Activated CD8-positive, alpha-beta T cell treated with anti-CD3 and anti-CD28 coated beads for 36 hours (primary cell): ENCODE measurements at regions of chr6 and their contacts with region 1.

Region 1: GRCh38 chr6:34196126-34196830 is 40.4 kb upstream of the HMGA1 start:
- DNase-seq: peak; percentile 90
- ATAC-seq: peak; percentile 97
- H3K4me3 Mint-ChIP-seq: peak overlapping the region; percentile 71
- H3K27ac Mint-ChIP-seq: peak overlapping the region; percentile 67
- H3K4me1 Mint-ChIP-seq: peaks cover 10% of the 10 kb centered on the region
- H3K27me3 Mint-ChIP-seq: no peaks in the 10 kb centered on the region
- CTCF ChIP-seq: peak; percentile 99

Region 2: DNA sequence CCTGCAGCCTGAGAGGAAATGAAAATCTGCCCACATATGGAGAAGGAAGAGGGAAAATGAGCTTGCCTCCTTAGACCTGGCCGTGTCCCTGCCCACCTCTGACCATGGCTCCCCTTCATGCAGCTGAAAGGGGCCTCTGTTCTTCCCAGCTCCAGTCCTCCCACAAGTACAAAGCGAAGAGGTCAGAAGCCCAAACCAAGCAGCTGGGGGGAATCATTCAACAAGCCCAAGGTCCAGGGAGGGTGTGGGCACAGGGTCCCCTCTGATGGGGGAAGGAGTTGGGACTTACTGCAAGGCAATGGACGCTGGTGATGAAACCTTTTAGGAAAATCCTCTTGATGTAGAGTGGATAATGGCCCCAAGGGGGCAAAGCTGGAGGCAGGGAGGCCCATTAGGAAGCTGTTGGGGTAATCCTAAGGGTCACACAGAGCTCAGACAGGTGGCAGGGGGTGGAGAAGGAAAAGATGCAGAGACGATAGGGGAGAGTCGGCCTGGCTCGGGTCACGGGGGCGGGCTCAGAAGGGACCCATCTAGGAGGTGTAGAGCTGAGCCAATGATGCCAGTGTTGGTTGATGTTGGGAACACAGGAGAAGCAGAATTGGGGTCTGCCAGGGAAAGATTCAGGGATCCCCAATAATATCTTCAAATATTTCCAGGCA is 34.3 kb before region 1 on chr6:
- CTCF ChIA-PET with region 1: interaction called, 16 read pairs
- POLR2A ChIA-PET with region 1: no interaction called
- intact Hi-C with region 1: no loop called
- DNase-seq: no peak
- ATAC-seq: no peak
- H3K4me3 Mint-ChIP-seq: no peak overlapping the region
- H3K27ac Mint-ChIP-seq: no peak overlapping the region
- H3K4me1 Mint-ChIP-seq: no peaks in the 10 kb centered on the region
- H3K27me3 Mint-ChIP-seq: no peaks in the 10 kb centered on the region
- CTCF ChIP-seq: no peak

Region 3: DNA sequence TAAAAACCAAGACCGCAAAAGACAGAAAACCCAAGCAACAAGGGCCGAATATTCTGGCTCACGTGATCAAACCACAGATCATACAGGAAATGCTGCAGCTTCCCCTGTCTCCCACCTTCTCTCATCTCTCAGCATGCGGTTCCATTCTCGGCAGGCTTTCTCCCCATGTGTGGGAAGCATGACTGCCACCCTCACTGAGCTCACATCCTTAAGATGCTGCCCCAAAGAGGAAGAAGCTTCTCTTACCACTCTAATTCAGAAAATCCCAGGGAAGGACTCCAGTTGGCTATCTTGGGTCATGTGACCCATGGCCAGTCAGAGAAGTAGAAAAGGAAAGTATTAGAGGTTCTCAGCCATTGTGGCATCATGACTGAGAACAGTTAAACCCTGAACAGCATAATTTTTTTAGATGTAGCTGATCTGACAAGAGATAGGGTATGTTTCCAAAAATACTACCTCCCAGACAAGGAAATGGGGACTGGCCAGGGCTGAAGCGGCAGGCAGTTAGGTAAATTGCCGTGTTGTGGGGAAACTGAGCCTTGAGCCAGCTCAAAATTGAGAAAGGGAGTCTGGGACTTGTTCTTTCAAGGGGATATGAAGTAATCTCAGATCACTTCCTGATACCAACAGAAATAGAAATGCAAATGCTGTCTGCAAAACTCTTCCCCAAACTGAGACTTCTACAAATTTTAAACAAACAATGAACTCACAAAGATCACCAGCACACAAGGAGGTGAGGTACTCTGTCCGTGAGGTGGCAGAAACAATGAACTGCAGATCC is 13.3 kb before region 1 on chr6:
- CTCF ChIA-PET with region 1: interaction called, 24 read pairs
- POLR2A ChIA-PET with region 1: interaction called, 4 read pairs
- intact Hi-C with region 1: no loop called
- DNase-seq: peak; percentile 79
- ATAC-seq: peak; percentile 94
- H3K4me3 Mint-ChIP-seq: peak overlapping the region; percentile 66
- H3K27ac Mint-ChIP-seq: peak overlapping the region; percentile 96
- H3K4me1 Mint-ChIP-seq: peaks cover 25% of the 10 kb centered on the region
- H3K27me3 Mint-ChIP-seq: no peaks in the 10 kb centered on the region
- CTCF ChIP-seq: no peak

Region 4: GRCh38 chr6:34223956-34224940 is 28.0 kb after region 1 on chr6:
- CTCF ChIA-PET with region 1: interaction called, 17 read pairs
- POLR2A ChIA-PET with region 1: interaction called, 11 read pairs
- intact Hi-C with region 1: no loop called
- DNase-seq: peak; percentile 96
- ATAC-seq: peak; percentile 98
- H3K4me3 Mint-ChIP-seq: peak overlapping the region; percentile 58
- H3K27ac Mint-ChIP-seq: peak overlapping the region; percentile 93
- H3K4me1 Mint-ChIP-seq: peaks cover 41% of the 10 kb centered on the region
- H3K27me3 Mint-ChIP-seq: no peaks in the 10 kb centered on the region
- CTCF ChIP-seq: no peak

Region 5: GRCh38 chr6:34236131-34236996 is 40.1 kb after region 1 on chr6 and contains the start of gene HMGA1:
- CTCF ChIA-PET with region 1: interaction called, 7 read pairs
- POLR2A ChIA-PET with region 1: interaction called, 19 read pairs
- intact Hi-C with region 1: loop called (anchors 5 kb)
- DNase-seq: peak; percentile 93
- ATAC-seq: peak; percentile 70
- H3K4me3 Mint-ChIP-seq: peak within 1 kb of the TSS; percentile 93
- H3K27ac Mint-ChIP-seq: peak within 1 kb of the TSS; percentile 94
- H3K4me1 Mint-ChIP-seq: peaks cover 29% of the 10 kb centered on the region
- H3K27me3 Mint-ChIP-seq: no peaks in the 10 kb centered on the region
- CTCF ChIP-seq: no peak
- total RNA-seq, gene HMGA1: 683 to 709 TPM

Region 6: GRCh38 chr6:34248727-34249551 is 52.7 kb after region 1 on chr6 and contains the start of gene SMIM29:
- CTCF ChIA-PET with region 1: interaction called, 33 read pairs
- POLR2A ChIA-PET with region 1: interaction called, 15 read pairs
- intact Hi-C with region 1: no loop called
- DNase-seq: peak; percentile 97
- ATAC-seq: peak; percentile 88
- H3K4me3 Mint-ChIP-seq: peak within 1 kb of the TSS; percentile 85
- H3K27ac Mint-ChIP-seq: peak within 1 kb of the TSS; percentile 89
- H3K4me1 Mint-ChIP-seq: peaks cover 37% of the 10 kb centered on the region
- H3K27me3 Mint-ChIP-seq: no peaks in the 10 kb centered on the region
- CTCF ChIP-seq: peak; percentile 88
- total RNA-seq, gene SMIM29: 13.3 to 16.4 TPM

Region 7: DNA sequence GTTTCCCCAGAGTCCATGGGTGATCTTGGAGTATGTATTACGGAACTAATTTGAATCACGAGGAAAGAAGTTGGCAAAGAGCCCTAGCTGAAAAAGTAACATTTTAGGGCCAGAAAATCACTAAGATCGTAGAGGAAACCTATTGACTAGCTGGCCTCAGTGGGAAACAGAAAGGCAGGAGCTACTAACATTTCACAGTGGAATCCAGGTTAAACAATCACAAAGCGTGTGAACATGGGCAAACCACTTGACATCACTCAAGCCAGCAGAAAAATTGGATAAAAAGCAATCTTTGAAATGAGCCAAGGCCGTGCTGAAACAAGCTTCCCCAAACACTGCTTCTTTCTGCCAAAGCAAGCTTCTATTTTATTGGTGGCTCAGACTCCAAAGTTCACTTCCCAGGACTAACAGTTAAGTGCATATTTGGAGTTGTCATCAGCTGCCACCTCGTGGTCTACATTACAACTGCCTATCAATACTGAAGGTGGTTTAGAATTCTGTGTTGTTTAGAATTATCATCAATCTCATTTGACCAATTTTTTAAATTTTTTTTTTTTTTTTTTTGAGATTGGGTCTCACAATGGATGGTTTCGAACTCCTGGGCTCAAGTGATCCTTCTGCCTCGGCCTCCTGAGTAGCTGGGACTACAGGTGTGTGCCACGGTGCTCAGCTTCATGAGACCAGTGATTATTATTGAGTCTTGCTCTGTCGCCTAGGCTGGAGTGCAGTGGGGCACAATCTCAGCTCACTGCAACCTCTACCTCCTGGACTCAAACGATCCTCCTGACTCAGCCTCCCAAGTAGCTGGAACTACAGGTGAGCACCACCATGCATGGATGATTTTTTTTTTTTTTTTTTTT is 219.0 kb after region 1 on chr6:
- CTCF ChIA-PET with region 1: interaction called, 29 read pairs
- POLR2A ChIA-PET with region 1: interaction called, 6 read pairs
- intact Hi-C with region 1: no loop called
- DNase-seq: peak; percentile 53
- ATAC-seq: peak; percentile 61
- H3K4me3 Mint-ChIP-seq: no peak overlapping the region
- H3K27ac Mint-ChIP-seq: peak overlapping the region; percentile 30
- H3K4me1 Mint-ChIP-seq: peaks cover 14% of the 10 kb centered on the region
- H3K27me3 Mint-ChIP-seq: no peaks in the 10 kb centered on the region
- CTCF ChIP-seq: peak; percentile 11